ENCODE measurements at regions of chr17 and their contacts with region 1.

Region 1: DNA sequence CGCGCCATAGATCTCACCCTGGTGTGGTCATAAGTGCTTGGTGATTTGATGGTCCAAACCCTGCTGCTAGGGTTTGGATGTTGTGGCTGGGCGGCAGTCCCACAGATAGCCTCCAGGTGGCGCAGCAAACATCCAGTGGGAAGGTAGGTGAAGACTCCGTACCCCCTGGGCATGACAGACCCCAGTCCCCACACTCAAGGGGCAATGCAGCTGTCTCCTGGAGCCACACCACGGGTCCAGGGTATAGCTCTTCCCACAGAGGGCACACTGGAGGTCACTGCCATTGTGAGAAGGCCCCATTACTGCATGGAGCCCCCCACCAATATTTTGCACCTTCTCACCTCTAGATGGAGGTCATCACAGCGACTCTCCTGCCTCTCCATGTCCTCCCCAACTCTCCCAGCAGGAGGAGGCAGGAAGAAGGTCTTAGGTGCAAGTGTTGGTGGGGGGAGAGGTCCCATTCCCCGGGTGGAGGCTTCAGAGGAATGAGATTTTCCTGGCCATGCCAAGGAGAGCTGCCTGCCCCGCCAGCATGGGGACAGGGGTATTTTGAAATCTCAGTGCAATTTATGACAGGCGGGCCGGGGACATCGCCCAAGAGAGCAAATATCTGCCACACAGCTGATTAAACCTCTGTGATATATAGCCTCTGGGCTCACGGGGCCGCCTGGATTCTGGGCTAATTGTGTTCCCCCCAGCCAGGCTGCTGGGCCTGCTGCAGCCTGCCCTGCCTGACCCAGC is 17.1 kb upstream of the C17orf113 start:
- DNase-seq: peak; percentile 84
- ATAC-seq: peak; percentile 43
- H3K4me3 Mint-ChIP-seq: no peak overlapping the region
- H3K27ac Mint-ChIP-seq: no peak overlapping the region
- H3K4me1 Mint-ChIP-seq: peaks cover 30% of the 10 kb centered on the region
- H3K27me3 Mint-ChIP-seq: peaks cover 2% of the 10 kb centered on the region
- CTCF ChIP-seq: peak; percentile 90

Region 2: DNA sequence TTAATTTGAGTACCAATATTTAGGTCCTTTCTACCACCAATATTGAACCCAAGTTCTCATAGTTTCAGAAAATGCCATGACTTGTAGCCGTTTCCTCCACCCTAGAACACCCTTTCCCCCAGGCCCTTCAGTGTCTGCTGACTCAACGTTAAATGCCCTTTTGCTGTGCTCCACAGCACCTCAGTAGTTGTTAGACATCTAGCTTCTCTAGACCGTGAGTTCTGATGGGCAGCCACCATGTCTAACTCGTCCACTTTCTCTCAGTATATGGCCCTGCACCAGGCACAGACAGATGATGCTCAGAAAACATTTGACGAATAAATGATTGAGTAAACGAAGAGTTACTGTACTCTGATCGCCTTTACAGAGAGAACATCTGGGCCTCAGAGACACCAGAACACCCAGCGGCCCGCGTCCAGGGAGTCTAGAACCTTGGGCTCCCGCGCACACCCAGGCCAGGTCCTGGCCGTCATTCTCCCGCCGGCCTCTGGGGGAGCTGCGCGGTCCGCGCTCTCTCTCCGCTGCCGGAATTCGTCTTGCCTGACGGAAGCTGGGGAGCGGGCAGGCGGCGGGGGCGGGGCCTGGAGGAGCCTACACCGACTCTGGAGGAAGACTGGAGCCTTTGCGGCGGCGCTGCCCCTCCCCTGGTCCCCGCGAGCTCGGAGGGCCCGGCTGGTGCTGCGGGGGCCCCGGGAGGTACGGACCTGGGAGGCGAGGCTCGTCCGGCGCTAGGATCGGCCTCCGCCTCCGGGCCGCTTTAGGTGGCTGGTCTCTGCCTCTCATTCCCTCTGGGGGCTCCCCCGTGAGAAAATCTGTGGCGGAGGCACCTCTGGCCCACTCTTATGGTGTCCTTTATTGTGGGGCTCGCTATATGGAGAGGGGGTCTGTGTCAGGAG is 47.8 kb before region 1 on chr17 and contains the start of gene NKIRAS2:
- CTCF ChIA-PET with region 1: interaction called, 14 read pairs
- POLR2A ChIA-PET with region 1: interaction called, 6 read pairs
- intact Hi-C with region 1: no loop called
- DNase-seq: peak; percentile 96
- ATAC-seq: peak; percentile 81
- H3K4me3 Mint-ChIP-seq: peak within 1 kb of the TSS; percentile 97
- H3K27ac Mint-ChIP-seq: peak within 1 kb of the TSS; percentile 79
- H3K4me1 Mint-ChIP-seq: peaks cover 50% of the 10 kb centered on the region
- H3K27me3 Mint-ChIP-seq: no peaks in the 10 kb centered on the region
- CTCF ChIP-seq: peak; percentile 95
- total RNA-seq, gene NKIRAS2: 13.8 to 15.0 TPM

Region 3: DNA sequence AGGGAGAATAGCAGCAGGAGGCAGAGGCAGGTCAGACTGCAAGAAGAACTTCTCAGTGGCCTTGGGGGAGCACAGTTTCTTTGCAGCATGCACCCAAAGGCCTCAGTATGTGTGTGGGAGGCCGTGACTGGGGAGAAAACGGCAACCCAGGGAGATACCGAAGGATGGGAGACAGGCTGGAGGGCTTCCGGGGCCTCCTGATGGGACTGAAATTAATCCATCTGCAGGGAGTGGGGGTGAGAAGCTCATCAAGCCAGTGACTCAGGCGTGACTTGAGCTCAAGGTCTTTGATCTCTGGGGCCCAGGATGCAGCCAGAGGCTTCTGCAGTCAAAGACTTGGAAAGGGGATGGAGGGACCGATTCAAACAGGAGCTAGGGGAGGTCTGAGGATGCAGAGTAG is 12.0 kb before region 1 on chr17:
- CTCF ChIA-PET with region 1: interaction called, 30 read pairs
- POLR2A ChIA-PET with region 1: interaction called, 4 read pairs
- intact Hi-C with region 1: no loop called
- DNase-seq: no peak
- ATAC-seq: peak; percentile 28
- H3K4me3 Mint-ChIP-seq: no peak overlapping the region
- H3K27ac Mint-ChIP-seq: no peak overlapping the region
- H3K4me1 Mint-ChIP-seq: peaks cover 4% of the 10 kb centered on the region
- H3K27me3 Mint-ChIP-seq: peaks cover 22% of the 10 kb centered on the region
- CTCF ChIP-seq: no peak

Region 4: GRCh38 chr17:42090964-42091790 is 23.7 kb after region 1 on chr17:
- CTCF ChIA-PET with region 1: interaction called, 72 read pairs
- POLR2A ChIA-PET with region 1: no interaction called
- intact Hi-C with region 1: no loop called
- DNase-seq: no peak
- ATAC-seq: no peak
- H3K4me3 Mint-ChIP-seq: no peak overlapping the region
- H3K27ac Mint-ChIP-seq: no peak overlapping the region
- H3K4me1 Mint-ChIP-seq: no peaks in the 10 kb centered on the region
- H3K27me3 Mint-ChIP-seq: peaks cover 4% of the 10 kb centered on the region
- CTCF ChIP-seq: no peak

Region 5: GRCh38 chr17:42112552-42113176 is 45.1 kb after region 1 on chr17 and contains the start of gene DHX58:
- CTCF ChIA-PET with region 1: interaction called, 37 read pairs
- POLR2A ChIA-PET with region 1: interaction called, 5 read pairs
- intact Hi-C with region 1: loop called (anchors 2 kb)
- DNase-seq: peak; percentile 89
- ATAC-seq: peak; percentile 82
- H3K4me3 Mint-ChIP-seq: peak within 1 kb of the TSS; percentile 79
- H3K27ac Mint-ChIP-seq: peak within 1 kb of the TSS; percentile 92
- H3K4me1 Mint-ChIP-seq: peaks cover 30% of the 10 kb centered on the region
- H3K27me3 Mint-ChIP-seq: no peaks in the 10 kb centered on the region
- CTCF ChIP-seq: no peak
- total RNA-seq, gene DHX58: 31.7 to 36.2 TPM